OCI-LY7 (cell line): ENCODE measurements at regions of chr1 and their contacts with region 1.

Region 1: DNA sequence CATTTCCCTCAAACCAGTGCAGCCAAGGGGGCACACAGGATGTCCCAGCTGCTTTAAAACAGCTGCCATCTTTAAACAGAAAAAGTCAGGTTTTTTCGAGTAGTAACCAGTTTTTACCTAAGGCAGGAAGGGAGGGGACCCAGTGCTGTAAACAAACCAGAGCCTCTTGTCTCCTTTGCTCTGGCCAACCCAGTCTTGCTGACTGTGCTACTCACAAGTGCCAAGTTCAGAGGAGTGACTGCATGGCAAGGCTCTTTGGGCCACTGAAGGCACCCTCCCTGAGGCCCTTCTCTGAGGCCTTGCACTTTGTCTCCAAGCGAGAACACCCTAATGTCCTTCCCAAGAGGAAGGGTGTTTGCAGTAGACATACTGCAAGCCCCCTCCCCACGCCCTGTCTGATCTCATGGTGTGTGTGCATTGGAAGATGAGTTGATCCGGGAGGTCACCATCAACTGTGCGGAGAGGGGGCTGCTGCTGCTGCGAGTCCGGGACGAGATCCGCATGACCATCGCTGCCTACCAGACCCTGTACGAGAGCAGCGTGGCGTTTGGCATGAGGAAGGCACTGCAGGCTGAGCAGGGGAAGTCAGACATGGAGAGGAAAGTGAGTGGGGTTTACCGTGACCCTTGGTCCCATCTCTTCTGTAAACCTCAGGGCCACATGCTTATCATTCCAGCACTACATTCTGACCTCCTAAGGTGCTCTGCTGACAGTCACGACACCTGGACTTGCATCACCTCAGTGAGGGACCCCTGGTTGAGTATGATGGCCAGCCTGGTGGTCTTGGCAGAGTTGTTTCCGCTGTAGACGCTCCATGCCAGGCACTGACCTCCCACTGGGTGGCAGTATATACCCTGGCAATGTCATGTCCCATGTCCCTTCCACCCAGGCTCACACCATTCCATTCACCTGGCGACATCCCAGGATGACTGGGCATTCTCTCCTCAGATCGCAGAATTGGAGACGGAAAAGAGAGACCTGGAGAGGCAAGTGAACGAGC is 4.7 kb downstream of the DNALI1 start:
- DNase-seq: peak; percentile 64
- H3K4me3 ChIP-seq: no peak overlapping the region
- H3K27ac ChIP-seq: no peak overlapping the region
- H3K4me1 ChIP-seq: no peaks in the 10 kb centered on the region
- CTCF ChIP-seq: peak; percentile 88

Region 2: GRCh38 chr1:36420836-36421664 is 1140.4 kb before region 1 on chr1:
- CTCF ChIA-PET with region 1: no interaction called
- POLR2A ChIA-PET with region 1: no interaction called
- intact Hi-C with region 1: no loop called
- DNase-seq: peak; percentile 89
- H3K4me3 ChIP-seq: no peak overlapping the region
- H3K27ac ChIP-seq: peak overlapping the region; percentile 22
- H3K4me1 ChIP-seq: peaks cover 11% of the 10 kb centered on the region
- CTCF ChIP-seq: peak; percentile 98

Region 3: GRCh38 chr1:37338658-37339057 is 222.8 kb before region 1 on chr1:
- CTCF ChIA-PET with region 1: no interaction called
- POLR2A ChIA-PET with region 1: no interaction called
- intact Hi-C with region 1: no loop called
- DNase-seq: no peak
- H3K4me3 ChIP-seq: no peak overlapping the region
- H3K27ac ChIP-seq: no peak overlapping the region
- H3K4me1 ChIP-seq: no peaks in the 10 kb centered on the region
- CTCF ChIP-seq: no peak

Region 4: DNA sequence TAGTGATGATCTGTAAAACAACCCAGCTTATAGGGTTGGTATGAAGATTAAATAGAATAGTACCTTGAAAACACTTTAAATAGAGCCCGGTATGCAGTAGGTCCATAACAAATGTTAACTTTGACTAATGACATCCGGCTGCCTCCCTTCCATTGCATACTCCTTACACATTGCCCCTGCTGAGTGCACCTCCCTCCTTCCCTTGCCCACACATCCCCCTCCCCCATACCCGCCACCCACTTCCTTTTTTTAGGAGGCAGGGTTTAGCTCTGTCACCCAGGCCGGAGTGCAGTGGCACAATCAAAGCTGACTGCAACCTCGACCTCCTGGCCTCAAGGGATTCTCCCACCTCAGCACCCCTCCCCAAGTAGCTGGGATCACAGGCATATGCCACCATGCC is 111.5 kb before region 1 on chr1:
- CTCF ChIA-PET with region 1: no interaction called
- POLR2A ChIA-PET with region 1: no interaction called
- intact Hi-C with region 1: loop called (anchors 10 kb)
- DNase-seq: peak; percentile 68
- H3K4me3 ChIP-seq: no peak overlapping the region
- H3K27ac ChIP-seq: no peak overlapping the region
- H3K4me1 ChIP-seq: peaks cover 20% of the 10 kb centered on the region
- CTCF ChIP-seq: no peak